IMR-90 (cell line): ENCODE measurements at regions of chr6 and their contacts with region 1.

Region 1: GRCh38 chr6:107230024-107230423 is 114.7 kb upstream of the BEND3 start:
- DNase-seq: no peak
- ATAC-seq: no peak
- H3K4me3 ChIP-seq: no peak overlapping the region
- H3K27ac ChIP-seq: no peak overlapping the region
- H3K4me1 ChIP-seq: no peaks in the 10 kb centered on the region; the same call in 1 of the 2 replicates
- H3K27me3 ChIP-seq: no peaks in the 10 kb centered on the region
- CTCF ChIP-seq: no peak
- POLR2A ChIP-seq: no peak
- RAD21 ChIP-seq: no peak

Region 2: GRCh38 chr6:106527966-106528365 is 702.1 kb before region 1 on chr6:
- CTCF ChIA-PET with region 1: no interaction called
- POLR2A ChIA-PET with region 1: interaction called, 13 read pairs
- dilution Hi-C with region 1: no loop called
- in situ Hi-C with region 1: no loop called
- intact Hi-C with region 1: no loop called
- DNase-seq: peak; percentile 98
- ATAC-seq: peak; percentile 75
- H3K4me3 ChIP-seq: no peak overlapping the region
- H3K27ac ChIP-seq: no peak overlapping the region
- H3K4me1 ChIP-seq: peaks cover 5% of the 10 kb centered on the region
- H3K27me3 ChIP-seq: no peaks in the 10 kb centered on the region
- CTCF ChIP-seq: no peak
- POLR2A ChIP-seq: no peak
- RAD21 ChIP-seq: no peak